Activated T-helper 1 cell treated with anti-CD3 and anti-CD28 coated beads, Interleukin-12 subunit alpha, Interleukin-12 subunit beta, Interleukin-2, Interleukin-4 antibody, amounts not matched to agents 30 ng/mL and 10 ng/mL and 1 ng/mL, durations not matched to agents 14 hours and 24 hours and 36 hours (primary cell): ENCODE measurements at regions of chr3 and their contacts with region 1.

Region 1: DNA sequence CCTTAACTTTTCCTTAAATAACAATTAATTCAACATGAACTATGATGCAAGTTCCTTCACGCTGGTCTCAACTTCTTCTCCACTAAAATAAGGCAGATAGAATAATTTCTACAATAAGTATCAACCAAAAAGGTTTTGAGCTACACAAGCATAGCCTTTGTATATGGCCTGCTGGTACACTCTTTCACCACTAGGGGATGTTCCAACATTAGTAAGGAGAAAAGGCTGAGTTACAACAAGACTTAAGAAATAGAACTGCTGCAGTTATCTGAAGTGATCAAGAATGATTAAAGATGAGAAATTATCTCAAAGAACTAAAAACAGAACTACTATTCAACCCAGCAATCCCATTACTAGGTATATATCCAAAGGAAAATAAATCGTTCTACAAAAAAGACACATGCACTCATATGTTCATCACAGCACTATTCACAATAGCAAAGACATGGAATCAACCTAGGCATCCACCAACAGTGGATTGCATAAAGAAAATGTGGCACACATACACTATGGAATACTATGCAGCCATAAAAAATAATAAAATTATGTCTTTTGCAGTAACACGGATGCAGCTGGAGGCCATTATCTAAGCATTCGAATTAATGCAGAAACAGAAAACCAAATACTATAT is 14.4 kb downstream of the ATP13A3 start:
- DNase-seq: peak; percentile 16
- H3K4me3 Mint-ChIP-seq: no peak overlapping the region
- H3K27ac Mint-ChIP-seq: no peak overlapping the region
- H3K4me1 Mint-ChIP-seq: peaks cover 12% of the 10 kb centered on the region
- H3K27me3 Mint-ChIP-seq: no peaks in the 10 kb centered on the region

Region 2: DNA sequence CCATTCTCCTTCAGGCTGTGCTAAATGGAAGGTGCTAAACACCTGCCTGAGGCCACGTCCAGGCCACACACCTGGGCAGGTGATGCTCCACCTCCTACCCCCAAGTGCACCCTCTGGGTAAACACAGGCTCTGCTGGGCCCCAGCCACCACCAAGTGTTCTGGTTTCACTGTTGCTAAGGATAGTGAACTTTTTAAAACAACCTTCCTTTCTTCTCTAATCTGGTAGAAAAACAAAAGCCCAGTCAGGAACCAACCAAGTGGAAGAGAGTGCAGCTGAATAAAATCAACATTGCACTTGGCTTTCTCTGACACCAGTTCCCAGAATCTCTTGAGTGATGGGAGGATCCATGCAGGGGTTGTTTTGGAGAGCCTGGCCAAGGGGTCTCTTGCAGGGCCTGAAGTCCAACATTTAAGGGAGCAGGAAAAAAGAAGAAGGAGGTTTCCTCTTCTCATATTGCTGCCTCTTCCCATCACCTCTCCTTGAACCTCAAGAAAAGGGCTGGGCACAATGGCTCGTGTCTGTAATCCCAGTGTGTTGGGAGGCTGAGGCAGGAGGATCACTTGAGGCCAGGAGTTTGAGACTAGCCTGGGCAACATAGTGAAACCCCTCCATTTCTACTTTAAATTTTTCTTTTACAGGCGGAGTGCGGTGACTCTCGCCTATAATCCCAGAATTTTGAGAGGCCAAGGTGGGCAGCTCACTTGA is 40.6 kb after region 1 on chr3:
- intact Hi-C with region 1: no loop called
- DNase-seq: no peak
- H3K4me3 Mint-ChIP-seq: no peak overlapping the region
- H3K27ac Mint-ChIP-seq: no peak overlapping the region
- H3K4me1 Mint-ChIP-seq: no peaks in the 10 kb centered on the region
- H3K27me3 Mint-ChIP-seq: peaks cover 7% of the 10 kb centered on the region

Region 3: GRCh38 chr3:194592798-194593752 is 120.7 kb after region 1 on chr3:
- intact Hi-C with region 1: loop called (anchors 1 kb)
- DNase-seq: no peak
- H3K4me3 Mint-ChIP-seq: no peak overlapping the region
- H3K27ac Mint-ChIP-seq: no peak overlapping the region
- H3K4me1 Mint-ChIP-seq: peaks cover 5% of the 10 kb centered on the region
- H3K27me3 Mint-ChIP-seq: no peaks in the 10 kb centered on the region